ENCODE measurements at regions of chr6 and their contacts with region 1.

Region 1: GRCh38 chr6:43386492-43386891 is 17.0 kb upstream of the ZNF318 start:
- DNase-seq: no peak
- H3K4me3 ChIP-seq: no peak overlapping the region
- H3K27ac ChIP-seq: no peak overlapping the region
- H3K4me1 ChIP-seq: peaks cover 72% of the 10 kb centered on the region
- CTCF ChIP-seq: peak; percentile 66

Region 2: DNA sequence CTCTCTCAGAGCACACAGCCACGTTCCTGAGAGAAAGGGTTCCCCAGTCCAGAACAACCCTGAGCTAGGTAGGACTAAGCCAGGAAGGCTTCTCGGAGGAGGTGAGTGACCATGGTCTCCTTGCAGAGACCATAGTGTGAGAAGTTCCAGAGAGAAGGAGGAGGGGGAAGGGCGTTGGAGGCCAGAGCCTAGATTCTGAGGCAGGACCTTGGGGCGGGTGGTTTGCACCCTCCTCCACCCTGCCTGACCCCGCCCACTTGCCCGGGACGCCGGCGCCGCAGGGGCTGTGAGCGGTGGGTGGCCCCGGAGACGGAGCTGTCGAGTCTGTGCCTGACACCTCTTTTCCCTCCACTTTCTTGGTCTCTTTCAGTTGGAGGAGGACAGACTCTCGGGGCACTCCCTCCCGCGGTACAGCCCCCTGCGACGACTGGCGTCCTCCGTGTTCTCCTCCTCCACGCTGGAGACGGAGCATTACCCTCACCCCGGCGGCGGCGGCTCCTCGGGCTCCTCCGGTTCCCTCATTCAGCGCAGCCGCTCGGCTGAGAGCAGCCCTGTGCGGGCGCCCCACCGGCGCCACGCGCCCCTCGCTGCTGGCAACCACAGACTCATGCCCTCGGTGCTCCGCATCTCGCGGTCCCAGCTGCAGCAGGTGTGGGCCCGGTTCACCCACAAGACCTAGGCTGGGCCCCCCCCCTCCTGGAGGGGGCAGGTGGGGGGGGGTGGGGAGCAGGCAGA is 117.1 kb before region 1 on chr6:
- CTCF ChIA-PET with region 1: no interaction called
- POLR2A ChIA-PET with region 1: no interaction called
- intact Hi-C with region 1: loop called (anchors 5 kb)
- DNase-seq: peak; percentile 45
- H3K4me3 ChIP-seq: peak overlapping the region; percentile 6
- H3K27ac ChIP-seq: no peak overlapping the region
- H3K4me1 ChIP-seq: peaks cover 32% of the 10 kb centered on the region
- CTCF ChIP-seq: no peak

Region 3: GRCh38 chr6:43328528-43328927 is 58.0 kb before region 1 on chr6:
- CTCF ChIA-PET with region 1: no interaction called
- POLR2A ChIA-PET with region 1: no interaction called
- intact Hi-C with region 1: loop called (anchors 2 kb)
- DNase-seq: no peak
- H3K4me3 ChIP-seq: no peak overlapping the region
- H3K27ac ChIP-seq: no peak overlapping the region
- H3K4me1 ChIP-seq: peaks cover 7% of the 10 kb centered on the region
- CTCF ChIP-seq: no peak

Region 4: DNA sequence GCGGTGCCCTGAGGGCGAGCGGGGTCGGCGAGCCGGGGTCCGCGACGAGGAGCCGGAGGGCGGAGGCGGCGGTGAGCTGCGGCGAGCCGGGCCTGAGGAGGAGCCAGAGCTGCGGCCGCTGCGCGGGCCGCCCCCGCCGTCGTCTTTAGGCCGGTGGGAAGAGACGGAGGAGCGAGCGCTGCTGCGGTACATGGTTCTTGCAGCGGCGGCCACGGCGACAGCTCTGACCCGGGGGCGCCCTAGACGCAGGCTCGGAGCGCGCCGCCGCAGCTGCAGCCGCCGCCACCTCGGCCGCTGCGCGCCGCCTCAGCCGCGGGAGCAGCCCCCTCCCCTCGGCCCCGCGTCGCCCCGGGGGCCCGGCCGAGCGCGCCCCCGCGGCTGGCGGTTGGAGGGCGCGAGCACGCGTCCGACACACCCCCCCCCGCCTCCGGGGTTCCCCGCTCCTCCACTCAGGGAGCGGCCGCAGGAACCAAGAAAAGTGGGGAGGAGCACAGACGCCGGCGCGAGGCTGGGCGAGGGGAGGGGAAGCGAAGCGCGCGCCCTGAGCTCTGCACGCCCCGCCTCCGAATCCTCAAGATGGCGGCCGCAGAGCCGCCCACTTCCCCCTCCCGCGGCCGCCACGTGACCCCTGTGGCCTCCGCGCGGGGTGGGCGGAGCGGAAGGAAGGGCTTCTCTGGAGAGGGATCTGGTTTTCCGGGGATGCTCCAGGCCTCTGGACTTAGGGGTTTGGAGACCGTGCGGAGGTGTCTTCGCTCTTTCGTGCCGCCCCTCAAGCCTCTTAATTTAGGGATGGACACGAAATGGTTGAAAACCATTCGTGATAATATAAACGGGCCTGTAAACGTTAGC is 17.1 kb before region 1 on chr6 and contains the start of gene ZNF318:
- CTCF ChIA-PET with region 1: interaction called, 6 read pairs
- POLR2A ChIA-PET with region 1: interaction called, 36 read pairs
- intact Hi-C with region 1: loop called (anchors 1 kb)
- DNase-seq: peak; percentile 98
- H3K4me3 ChIP-seq: peak within 1 kb of the TSS; percentile 80
- H3K27ac ChIP-seq: peak within 1 kb of the TSS; percentile 75
- H3K4me1 ChIP-seq: peaks cover 71% of the 10 kb centered on the region
- CTCF ChIP-seq: no peak
- total RNA-seq, gene ZNF318: 12.8 and 15.7 TPM in 2 replicates

Region 5: GRCh38 chr6:43608310-43608763 is 221.8 kb after region 1 on chr6:
- CTCF ChIA-PET with region 1: no interaction called
- POLR2A ChIA-PET with region 1: no interaction called
- intact Hi-C with region 1: no loop called
- DNase-seq: peak; percentile 62
- H3K4me3 ChIP-seq: no peak overlapping the region
- H3K27ac ChIP-seq: no peak overlapping the region
- H3K4me1 ChIP-seq: peaks cover 11% of the 10 kb centered on the region
- CTCF ChIP-seq: peak; percentile 94

Region 6: DNA sequence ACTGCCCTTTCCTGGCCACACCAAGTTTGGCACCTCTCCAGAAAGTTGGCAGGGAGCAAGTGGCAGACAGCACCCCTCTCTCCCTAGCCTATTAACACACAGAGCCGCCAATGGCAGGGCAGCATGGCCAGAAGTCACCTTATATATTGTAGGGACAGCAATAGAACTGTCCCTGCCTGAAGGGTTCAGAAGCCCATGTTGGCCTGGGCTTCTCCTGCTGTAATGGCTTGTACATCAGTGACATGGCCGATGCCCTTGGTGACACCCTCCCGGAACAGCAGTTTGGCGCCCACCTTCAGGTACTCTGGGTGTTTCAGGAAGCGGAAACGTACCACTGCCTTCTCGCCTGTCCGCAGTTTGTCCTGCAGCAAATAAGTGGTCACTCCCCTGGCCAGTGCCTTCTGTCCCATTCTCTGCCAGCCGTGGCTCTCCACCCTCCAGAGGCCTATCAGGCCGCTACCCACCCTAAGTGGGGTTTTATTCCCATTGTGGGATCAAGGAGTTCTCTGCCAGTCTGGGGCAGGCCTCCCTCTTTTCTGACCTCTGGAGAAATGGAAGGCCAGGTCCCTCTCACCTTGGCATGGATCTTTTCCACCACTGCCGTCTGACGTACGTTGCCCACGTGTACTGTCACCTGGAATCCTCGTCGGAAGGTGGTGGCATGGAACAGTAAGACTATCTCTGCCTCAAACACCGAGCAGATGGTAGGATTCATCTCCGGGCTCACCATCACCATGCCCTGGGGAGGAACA is 235.1 kb after region 1 on chr6:
- CTCF ChIA-PET with region 1: no interaction called
- POLR2A ChIA-PET with region 1: no interaction called
- intact Hi-C with region 1: no loop called
- DNase-seq: no peak
- H3K4me3 ChIP-seq: no peak overlapping the region
- H3K27ac ChIP-seq: no peak overlapping the region
- H3K4me1 ChIP-seq: no peaks in the 10 kb centered on the region
- CTCF ChIP-seq: no peak

Region 7: DNA sequence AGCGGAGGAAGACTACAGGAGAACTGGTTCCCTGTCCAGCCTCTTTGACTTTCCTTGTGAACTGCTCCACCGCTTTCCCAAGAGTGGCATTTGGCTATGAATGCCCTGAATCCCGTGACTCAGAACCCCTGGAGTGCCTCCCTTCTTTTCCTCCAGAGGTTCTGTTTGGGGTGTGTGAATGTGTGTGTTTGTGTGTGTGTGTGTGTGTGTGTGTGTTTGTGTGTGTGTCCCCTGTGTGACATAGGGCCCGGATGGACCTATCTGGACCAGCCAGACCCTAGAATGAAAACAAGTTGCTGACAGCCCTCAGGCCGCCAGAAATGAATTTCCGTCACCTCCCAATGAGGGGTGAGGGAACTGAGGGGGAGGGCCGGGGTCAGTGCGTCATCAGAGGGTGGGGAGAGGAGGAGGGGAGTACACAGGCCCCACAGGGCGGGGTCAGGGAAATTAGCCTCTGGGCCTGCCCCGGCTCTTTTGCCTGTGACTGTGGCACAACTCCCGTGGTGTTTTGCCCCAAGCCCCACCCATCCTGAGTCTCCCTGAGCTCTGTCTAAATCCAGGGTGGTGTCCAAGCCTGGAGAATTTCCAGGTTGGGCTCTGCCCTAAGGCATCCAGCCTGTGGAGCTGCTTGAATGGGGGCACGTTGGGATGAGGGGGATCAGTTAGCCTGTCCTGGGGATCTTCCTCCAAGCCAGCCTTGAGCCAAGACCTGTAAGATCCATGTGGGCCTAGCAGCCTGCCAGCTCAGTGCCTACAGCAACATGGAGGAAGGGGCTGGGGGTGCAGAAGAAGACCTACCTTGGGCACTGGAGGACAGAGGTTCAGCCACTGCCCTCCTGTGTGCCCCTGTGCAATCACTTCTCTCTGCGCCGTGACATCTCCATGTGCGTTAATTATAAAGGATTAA is 316.3 kb after region 1 on chr6:
- CTCF ChIA-PET with region 1: no interaction called
- POLR2A ChIA-PET with region 1: no interaction called
- intact Hi-C with region 1: loop called (anchors 10 kb)
- DNase-seq: peak; percentile 62
- H3K4me3 ChIP-seq: no peak overlapping the region
- H3K27ac ChIP-seq: no peak overlapping the region
- H3K4me1 ChIP-seq: peaks cover 59% of the 10 kb centered on the region
- CTCF ChIP-seq: no peak

Measured in OCI-LY7 (cell line).